Activated CD8-positive, alpha-beta T cell treated with anti-CD3 and anti-CD28 coated beads for 36 hours (primary cell): ENCODE measurements at regions of chr3 and their contacts with region 1.

Region 1: GRCh38 chr3:155805802-155806618 is at the start of gene C3orf33:
- DNase-seq: peak; percentile 79
- ATAC-seq: peak; percentile 98
- H3K4me3 Mint-ChIP-seq: peak within 1 kb of the TSS; percentile 86
- H3K27ac Mint-ChIP-seq: peak within 1 kb of the TSS; percentile 88
- H3K4me1 Mint-ChIP-seq: peaks cover 18% of the 10 kb centered on the region
- H3K27me3 Mint-ChIP-seq: peaks cover 9% of the 10 kb centered on the region
- CTCF ChIP-seq: peak; percentile 85
- total RNA-seq, gene C3orf33: 2.4 to 3.6 TPM

Region 2: GRCh38 chr3:155791190-155791589 is 14.8 kb before region 1 on chr3:
- CTCF ChIA-PET with region 1: interaction called, 33 read pairs
- POLR2A ChIA-PET with region 1: interaction called, 3 read pairs
- intact Hi-C with region 1: no loop called
- DNase-seq: no peak
- ATAC-seq: no peak
- H3K4me3 Mint-ChIP-seq: no peak overlapping the region
- H3K27ac Mint-ChIP-seq: no peak overlapping the region
- H3K4me1 Mint-ChIP-seq: peaks cover 8% of the 10 kb centered on the region
- H3K27me3 Mint-ChIP-seq: no peaks in the 10 kb centered on the region
- CTCF ChIP-seq: no peak

Region 3: GRCh38 chr3:155854141-155854940 is 48.3 kb after region 1 on chr3 and contains the start of gene SLC33A1:
- CTCF ChIA-PET with region 1: interaction called, 23 read pairs
- POLR2A ChIA-PET with region 1: interaction called, 18 read pairs
- intact Hi-C with region 1: loop called (anchors 5 kb)
- DNase-seq: peak; percentile 99
- ATAC-seq: peak; percentile 94
- H3K4me3 Mint-ChIP-seq: peak within 1 kb of the TSS; percentile 87
- H3K27ac Mint-ChIP-seq: peak within 1 kb of the TSS; percentile 100
- H3K4me1 Mint-ChIP-seq: peaks cover 16% of the 10 kb centered on the region
- H3K27me3 Mint-ChIP-seq: no peaks in the 10 kb centered on the region
- CTCF ChIP-seq: no peak
- total RNA-seq, gene SLC33A1: 18.5 to 19.8 TPM

Region 4: DNA sequence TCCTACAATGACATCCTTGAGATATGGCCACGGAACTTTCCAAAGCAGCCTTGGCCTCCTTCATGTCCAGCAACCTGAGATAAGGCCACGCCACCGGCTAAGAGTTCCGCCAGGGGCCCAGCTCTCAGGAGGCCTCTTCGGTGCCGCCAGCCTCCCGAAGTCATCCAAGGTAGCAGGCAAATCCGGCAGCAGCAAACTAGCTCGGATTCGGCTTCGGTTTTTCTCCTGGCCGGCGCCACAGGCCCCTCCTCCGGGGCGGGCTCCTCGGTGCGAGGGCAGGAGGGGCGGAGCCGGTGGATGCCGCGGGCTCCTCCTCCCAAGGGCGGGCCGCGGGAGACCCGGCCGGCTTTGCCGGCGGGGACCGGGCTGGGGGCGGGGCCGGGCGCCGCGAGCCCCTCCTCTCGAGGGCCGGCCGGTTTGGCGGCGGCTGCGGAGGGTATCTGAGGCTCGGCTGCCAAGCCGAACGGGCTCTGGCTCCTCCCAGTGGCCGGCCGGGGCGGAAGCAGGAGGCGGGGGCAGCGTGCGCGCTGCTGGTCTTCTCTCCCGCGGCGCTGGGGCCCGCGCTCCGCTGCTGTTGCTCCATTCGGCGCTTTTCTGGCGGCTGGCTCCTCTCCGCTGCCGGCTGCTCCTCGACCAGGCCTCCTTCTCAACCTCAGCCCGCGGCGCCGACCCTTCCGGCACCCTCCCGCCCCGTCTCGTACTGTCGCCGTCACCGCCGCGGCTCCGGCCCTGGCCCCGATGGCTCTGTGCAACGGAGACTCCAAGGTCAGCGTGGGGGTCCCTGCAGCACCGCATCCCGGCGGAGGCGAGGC is 64.3 kb after region 1 on chr3 and contains the start of gene GMPS:
- CTCF ChIA-PET with region 1: interaction called, 51 read pairs
- POLR2A ChIA-PET with region 1: interaction called, 6 read pairs
- intact Hi-C with region 1: no loop called
- DNase-seq: peak; percentile 94
- ATAC-seq: peak; percentile 94
- H3K4me3 Mint-ChIP-seq: peak within 1 kb of the TSS; percentile 87
- H3K27ac Mint-ChIP-seq: peak within 1 kb of the TSS; percentile 93
- H3K4me1 Mint-ChIP-seq: peaks cover 20% of the 10 kb centered on the region
- H3K27me3 Mint-ChIP-seq: no peaks in the 10 kb centered on the region
- CTCF ChIP-seq: no peak
- total RNA-seq, gene GMPS: 143 to 148 TPM

Region 5: GRCh38 chr3:155890671-155891190 is 84.7 kb after region 1 on chr3:
- CTCF ChIA-PET with region 1: interaction called, 10 read pairs
- POLR2A ChIA-PET with region 1: interaction called, 3 read pairs
- intact Hi-C with region 1: no loop called
- DNase-seq: no peak
- ATAC-seq: no peak
- H3K4me3 Mint-ChIP-seq: no peak overlapping the region
- H3K27ac Mint-ChIP-seq: no peak overlapping the region
- H3K4me1 Mint-ChIP-seq: peaks cover 43% of the 10 kb centered on the region
- H3K27me3 Mint-ChIP-seq: no peaks in the 10 kb centered on the region
- CTCF ChIP-seq: no peak

Region 6: DNA sequence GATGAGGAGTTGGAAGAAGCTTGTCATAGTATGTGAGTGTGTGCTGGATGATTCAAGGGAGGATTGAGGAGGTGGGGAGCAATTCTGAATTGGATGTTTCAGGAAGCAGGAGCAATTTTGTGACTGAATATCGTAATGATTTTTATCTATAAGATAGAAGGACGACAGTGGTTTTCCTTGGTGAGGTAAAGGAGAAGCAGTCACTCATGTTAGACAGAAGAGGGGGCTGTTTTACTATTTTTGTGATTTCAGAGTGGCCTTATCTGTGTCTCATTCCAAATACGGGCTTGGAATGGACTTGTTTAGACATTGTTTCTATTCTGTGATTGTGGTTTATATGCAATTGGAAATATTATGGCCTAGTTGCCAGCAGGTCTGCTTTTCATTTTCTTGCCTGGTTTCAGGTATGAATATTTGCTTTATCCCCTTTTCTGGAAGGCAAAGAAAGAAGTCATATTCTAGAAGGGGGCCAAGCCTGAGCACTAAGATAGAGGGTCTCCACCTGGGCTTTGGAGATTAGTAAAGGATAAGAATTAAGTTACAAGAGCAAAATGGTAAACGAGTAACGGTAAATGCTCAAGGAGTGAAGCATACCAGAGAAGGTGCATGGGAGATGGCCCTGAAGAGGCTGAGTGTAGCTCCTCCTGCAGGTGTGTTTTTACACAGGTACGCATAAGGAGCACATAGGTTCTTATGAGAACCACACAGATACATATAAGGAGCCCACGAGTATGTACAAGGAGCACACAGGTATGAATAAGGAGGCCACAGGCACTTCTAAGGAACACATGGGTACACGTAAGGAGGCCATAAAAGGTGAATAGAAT is 189.7 kb after region 1 on chr3:
- CTCF ChIA-PET with region 1: no interaction called
- POLR2A ChIA-PET with region 1: no interaction called
- intact Hi-C with region 1: no loop called
- DNase-seq: no peak
- ATAC-seq: peak; percentile 53
- H3K4me3 Mint-ChIP-seq: no peak overlapping the region
- H3K27ac Mint-ChIP-seq: no peak overlapping the region
- H3K4me1 Mint-ChIP-seq: no peaks in the 10 kb centered on the region
- H3K27me3 Mint-ChIP-seq: peaks cover 2% of the 10 kb centered on the region
- CTCF ChIP-seq: peak; percentile 54